ENCODE measurements at regions of chr10 and their contacts with region 1.

Region 1: GRCh38 chr10:98028168-98028770 is 2.2 kb downstream of the CRTAC1 start:
- DNase-seq: peak; percentile 48 to 79
- ATAC-seq: peak; percentile 78 to 93 (median 85)
- H3K4me3 ChIP-seq: no peak overlapping the region
- H3K4me3 Mint-ChIP-seq: no peak overlapping the region
- H3K27ac ChIP-seq: no peak overlapping the region
- H3K27ac Mint-ChIP-seq: no peak overlapping the region
- H3K4me1 ChIP-seq: no peaks in the 10 kb centered on the region
- H3K4me1 Mint-ChIP-seq: peaks cover 5% of the 10 kb centered on the region in 2 donors
- H3K27me3 ChIP-seq: peaks cover 23% of the 10 kb centered on the region
- H3K27me3 Mint-ChIP-seq: peaks cover 41 to 58% of the 10 kb centered on the region in 2 donors
- CTCF ChIP-seq: peak; percentile 75

Region 2: DNA sequence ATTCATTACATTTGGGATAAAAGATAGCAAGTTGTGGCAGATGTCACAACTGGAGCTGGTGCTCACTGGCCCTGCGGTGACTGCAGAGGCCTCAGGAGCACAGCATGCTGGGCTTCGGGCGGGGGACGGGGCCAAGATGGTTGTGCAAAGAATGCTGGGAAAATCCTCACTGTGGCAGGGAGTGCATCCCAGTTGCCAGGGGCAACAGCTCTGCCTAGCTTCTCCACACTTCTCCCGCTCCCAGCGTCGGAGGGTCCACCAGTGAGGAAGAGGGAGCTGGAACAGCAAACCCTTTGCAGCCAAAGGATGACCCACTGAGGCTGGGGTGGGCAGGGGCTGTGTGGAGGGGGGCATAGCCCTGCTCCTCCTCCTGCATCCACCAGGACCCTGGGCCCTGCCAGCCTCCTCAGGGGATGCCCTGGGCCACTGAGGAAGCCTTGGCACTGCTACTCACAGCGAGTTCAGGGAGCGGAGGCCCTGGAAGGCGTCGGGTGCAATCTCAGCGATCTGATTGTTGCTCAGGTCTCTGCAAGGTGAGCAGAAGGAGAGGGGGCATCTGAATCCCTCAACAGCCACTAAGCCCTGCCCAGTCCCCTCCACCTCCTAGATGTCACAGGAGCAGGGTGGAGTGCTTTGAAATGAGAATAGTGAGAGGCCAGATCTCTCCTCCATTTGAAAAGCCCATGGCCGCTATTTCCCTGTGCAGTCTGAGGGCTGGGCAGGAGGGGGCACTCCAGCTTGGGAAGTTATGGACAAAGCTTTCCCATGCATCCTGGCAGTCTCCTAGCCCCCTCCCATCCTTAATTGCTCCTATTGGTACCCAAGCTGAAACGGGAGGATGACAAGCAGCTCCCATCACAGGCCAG is 969.0 kb before region 1 on chr10:
- intact Hi-C with region 1: no loop called
- DNase-seq: no peak
- ATAC-seq: no peak
- H3K4me3 ChIP-seq: no peak overlapping the region
- H3K4me3 Mint-ChIP-seq: no peak overlapping the region
- H3K27ac ChIP-seq: no peak overlapping the region
- H3K27ac Mint-ChIP-seq: no peak overlapping the region
- H3K4me1 ChIP-seq: no peaks in the 10 kb centered on the region
- H3K4me1 Mint-ChIP-seq: no peaks in the 10 kb centered on the region
- H3K27me3 ChIP-seq: no peaks in the 10 kb centered on the region
- H3K27me3 Mint-ChIP-seq: no peaks in the 10 kb centered on the region
- CTCF ChIP-seq: no peak

Region 3: GRCh38 chr10:97759158-97759887 is 268.9 kb before region 1 on chr10:
- intact Hi-C with region 1: loop called (anchors 2 kb)
- DNase-seq: peak; percentile 44 to 71
- ATAC-seq: peak; percentile 66 to 84 (median 82)
- H3K4me3 ChIP-seq: no peak overlapping the region
- H3K4me3 Mint-ChIP-seq: no peak overlapping the region
- H3K27ac ChIP-seq: no peak overlapping the region
- H3K27ac Mint-ChIP-seq: peak overlapping the region in 1 of 2 donors; percentile 24
- H3K4me1 ChIP-seq: no peaks in the 10 kb centered on the region
- H3K4me1 Mint-ChIP-seq: peaks cover 0 to 3% of the 10 kb centered on the region in 2 donors
- H3K27me3 ChIP-seq: no peaks in the 10 kb centered on the region
- H3K27me3 Mint-ChIP-seq: no peaks in the 10 kb centered on the region
- CTCF ChIP-seq: peak; percentile 70

Region 4: GRCh38 chr10:97792141-97792721 is 236.0 kb before region 1 on chr10:
- intact Hi-C with region 1: loop called (anchors 5 kb)
- DNase-seq: peak; percentile 66 to 86
- ATAC-seq: peak; percentile 63 to 83 (median 82)
- H3K4me3 ChIP-seq: no peak overlapping the region
- H3K4me3 Mint-ChIP-seq: no peak overlapping the region
- H3K27ac ChIP-seq: no peak overlapping the region
- H3K27ac Mint-ChIP-seq: peak overlapping the region in 1 of 2 donors; percentile 60
- H3K4me1 ChIP-seq: peaks cover 27% of the 10 kb centered on the region
- H3K4me1 Mint-ChIP-seq: peaks cover 21 to 28% of the 10 kb centered on the region in 2 donors
- H3K27me3 ChIP-seq: no peaks in the 10 kb centered on the region
- H3K27me3 Mint-ChIP-seq: peaks cover 0 to 6% of the 10 kb centered on the region in 2 donors
- CTCF ChIP-seq: peak; percentile 96

Region 5: DNA sequence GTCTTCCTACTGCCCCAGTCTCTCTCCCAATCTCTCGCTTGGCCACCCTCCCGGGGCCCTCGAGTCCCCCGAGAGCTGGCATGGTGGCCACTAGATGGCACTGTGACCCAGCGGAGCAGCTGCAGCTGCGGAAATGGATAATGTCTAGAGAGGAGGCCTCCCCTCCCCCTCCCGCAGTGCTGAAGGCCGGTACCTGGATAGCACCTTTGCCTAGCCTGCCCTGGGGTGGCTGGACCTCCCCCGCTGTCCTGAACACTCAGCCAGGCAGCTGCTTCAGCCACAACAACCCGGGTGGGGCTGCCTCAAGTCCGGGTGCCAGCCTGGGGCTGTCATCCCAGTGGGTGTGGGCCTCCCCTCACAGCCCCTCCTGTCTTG is 113.4 kb before region 1 on chr10:
- intact Hi-C with region 1: loop called (anchors 5 kb)
- DNase-seq: peak; percentile 62 to 83
- ATAC-seq: peak; percentile 75 to 94 (median 82)
- H3K4me3 ChIP-seq: no peak overlapping the region
- H3K4me3 Mint-ChIP-seq: no peak overlapping the region
- H3K27ac ChIP-seq: no peak overlapping the region
- H3K27ac Mint-ChIP-seq: no peak overlapping the region
- H3K4me1 ChIP-seq: peaks cover 8% of the 10 kb centered on the region
- H3K4me1 Mint-ChIP-seq: peaks cover 6 to 10% of the 10 kb centered on the region in 2 donors
- H3K27me3 ChIP-seq: no peaks in the 10 kb centered on the region
- H3K27me3 Mint-ChIP-seq: peaks cover 17 to 36% of the 10 kb centered on the region in 2 donors
- CTCF ChIP-seq: peak; percentile 95

Measured in natural killer cell (primary cell).